Psoas muscle (tissue), 8 donors: ENCODE measurements at regions of chr5 and their contacts with region 1.

Region 1: GRCh38 chr5:38193015-38193581 is 65.3 kb upstream of the EGFLAM start:
- DNase-seq: peak; percentile 53 to 82
- ATAC-seq: peak; percentile 88 to 95 (median 91)
- H3K4me3 ChIP-seq: no peak overlapping the region
- H3K27ac ChIP-seq: no peak overlapping the region
- H3K4me1 ChIP-seq: peaks cover 4% of the 10 kb centered on the region
- H3K27me3 ChIP-seq: no peaks in the 10 kb centered on the region
- CTCF ChIP-seq: peak; percentile 93

Region 2: DNA sequence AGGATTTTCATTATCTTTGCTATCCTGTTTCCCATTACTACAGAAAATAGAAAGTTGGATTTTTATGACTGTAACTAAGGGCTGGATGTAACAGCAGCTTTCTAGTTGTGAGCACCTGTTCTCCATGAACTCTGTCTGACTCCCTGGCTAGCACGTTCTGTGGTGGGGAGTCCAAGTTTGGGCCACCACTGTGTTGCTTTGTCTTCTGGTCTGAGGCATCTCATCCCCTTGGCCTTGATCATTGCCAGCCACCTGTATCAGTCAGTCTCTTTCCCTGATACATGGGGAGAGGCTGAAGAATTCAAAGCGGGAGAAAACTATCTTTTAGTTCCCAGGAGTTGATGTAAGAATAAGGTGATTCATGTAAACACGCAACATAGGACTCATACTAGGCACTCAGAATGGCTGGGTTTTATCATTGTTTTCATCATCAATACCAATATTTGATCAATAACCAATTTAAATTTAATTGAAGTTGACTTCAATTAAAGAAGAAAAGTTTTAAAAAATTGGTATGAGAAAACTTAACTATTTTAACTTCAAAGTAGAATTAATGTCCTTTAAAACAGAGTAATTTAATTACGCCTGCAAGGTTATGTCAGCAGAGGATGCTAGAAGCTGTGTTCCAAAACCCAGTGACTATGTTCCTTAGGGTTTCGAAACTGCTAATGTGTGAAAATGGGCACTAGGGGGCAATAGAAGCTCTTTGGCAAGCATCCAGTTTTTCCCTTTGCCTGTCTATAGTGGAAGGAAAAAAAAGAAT is 780.4 kb before region 1 on chr5:
- intact Hi-C with region 1: loop called in 1 of 2 experiments (anchors 5 kb)
- DNase-seq: no peak
- ATAC-seq: peak; percentile 87 to 96 (median 93)
- H3K4me3 ChIP-seq: no peak overlapping the region
- H3K27ac ChIP-seq: no peak overlapping the region
- H3K4me1 ChIP-seq: no peaks in the 10 kb centered on the region
- H3K27me3 ChIP-seq: no peaks in the 10 kb centered on the region
- CTCF ChIP-seq: peak; percentile 83

Region 3: GRCh38 chr5:37837414-37838032 is 355.6 kb before region 1 on chr5:
- intact Hi-C with region 1: loop called (anchors 1 to 2 kb)
- DNase-seq: peak; percentile 73 to 87
- ATAC-seq: peak; percentile 29 to 70 (median 65)
- H3K4me3 ChIP-seq: peak overlapping the region; percentile 73
- H3K27ac ChIP-seq: peak overlapping the region; percentile 92
- H3K4me1 ChIP-seq: peaks cover 14% of the 10 kb centered on the region
- H3K27me3 ChIP-seq: peaks cover 0 to 24% (median 4%) of the 10 kb centered on the region in 3 donors
- CTCF ChIP-seq: peak; percentile 77

Region 4: DNA sequence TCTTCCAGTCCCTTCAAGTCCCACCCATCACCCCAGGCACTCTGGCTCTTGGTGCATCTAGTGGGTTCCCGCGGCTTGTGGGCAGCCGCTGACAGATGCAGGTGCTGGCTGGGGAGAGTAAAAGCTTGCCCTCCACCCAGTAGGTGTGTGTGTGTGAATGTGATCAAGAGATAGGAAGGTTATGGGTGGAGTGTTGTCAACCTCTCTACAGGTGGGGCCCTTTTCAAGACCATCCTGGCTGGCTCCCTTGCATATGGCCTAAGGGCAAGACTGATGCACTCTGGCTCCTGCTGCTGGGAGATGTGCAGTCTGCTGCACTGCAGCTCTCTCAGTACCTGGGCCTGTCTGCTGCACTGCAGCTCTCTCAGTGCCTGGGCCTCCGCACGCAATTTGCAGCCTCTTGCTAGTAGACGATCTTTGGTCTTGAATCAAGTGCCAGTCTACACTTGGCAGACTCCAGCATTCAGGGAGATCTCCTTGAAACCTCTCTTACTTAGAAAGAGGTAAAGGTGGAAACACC is 163.6 kb before region 1 on chr5:
- intact Hi-C with region 1: loop called in 1 of 2 experiments (anchors 10 kb)
- DNase-seq: no peak
- ATAC-seq: no peak
- H3K4me3 ChIP-seq: no peak overlapping the region
- H3K27ac ChIP-seq: no peak overlapping the region
- H3K4me1 ChIP-seq: no peaks in the 10 kb centered on the region
- H3K27me3 ChIP-seq: no peaks in the 10 kb centered on the region
- CTCF ChIP-seq: no peak

Region 5: DNA sequence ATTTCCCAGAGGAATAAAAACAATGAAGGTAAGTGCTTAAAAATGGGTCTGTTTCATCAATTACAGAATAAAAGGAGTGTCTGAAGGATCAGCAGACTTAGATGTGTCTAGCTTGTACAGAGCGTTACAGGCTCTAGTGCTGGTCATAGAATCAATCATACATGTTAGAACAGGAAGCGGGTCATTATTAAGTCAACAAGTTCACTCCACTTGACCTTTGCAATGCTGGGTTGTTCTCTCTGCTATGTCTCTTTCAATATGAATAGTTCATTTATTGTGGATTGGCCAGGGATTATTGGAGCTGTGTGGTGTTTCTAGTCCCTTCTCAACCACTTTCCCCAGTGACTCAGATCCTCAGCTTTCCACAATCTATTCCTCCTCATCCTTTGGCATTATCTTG is 44.6 kb after region 1 on chr5:
- intact Hi-C with region 1: no loop called
- DNase-seq: no peak
- ATAC-seq: no peak
- H3K4me3 ChIP-seq: no peak overlapping the region
- H3K27ac ChIP-seq: no peak overlapping the region
- H3K4me1 ChIP-seq: no peaks in the 10 kb centered on the region
- H3K27me3 ChIP-seq: no peaks in the 10 kb centered on the region
- CTCF ChIP-seq: no peak